H1 (cell line): ENCODE measurements at regions of chr17 and their contacts with region 1.

Region 1: DNA sequence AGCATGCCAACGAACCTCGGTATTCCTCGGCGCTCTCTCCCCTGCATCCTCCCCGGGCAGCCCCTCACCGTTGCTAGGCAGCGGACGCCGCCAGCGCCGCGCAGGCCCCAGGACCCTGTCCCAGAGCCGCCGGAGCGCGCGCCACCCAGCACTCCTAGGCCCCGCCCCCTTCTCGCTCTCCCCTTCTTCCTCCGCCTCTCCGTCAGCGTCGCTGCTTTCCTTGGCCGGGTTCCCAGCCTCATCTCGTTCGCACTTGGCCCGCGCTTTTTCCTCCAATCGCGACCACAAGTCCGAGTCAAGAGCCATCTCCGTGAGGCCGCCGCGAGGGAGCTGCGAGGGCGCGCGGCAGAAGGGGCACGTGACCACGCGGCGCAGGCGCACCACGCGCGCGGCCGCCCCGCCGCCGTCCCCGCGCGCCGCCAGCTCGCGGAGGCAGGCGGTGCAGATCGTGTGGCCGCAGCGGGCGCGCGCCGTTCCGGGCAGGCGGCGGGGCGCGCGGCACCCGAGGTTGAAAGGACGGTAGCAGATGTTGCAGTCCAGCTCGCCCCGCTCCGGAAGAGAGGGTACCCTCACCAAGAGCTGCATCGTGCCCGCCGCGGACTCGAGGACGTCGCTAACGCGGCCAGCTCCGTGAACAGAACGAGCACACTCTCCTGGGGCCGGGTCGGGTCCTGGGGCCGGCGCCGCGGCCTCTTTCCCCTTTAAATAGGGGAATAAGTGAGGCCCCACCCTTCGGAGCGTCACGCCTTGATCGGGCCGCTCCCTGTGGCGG is at the start of gene RNF227:
- DNase-seq: peak in 1 of 2 experiments; percentile 92
- H3K4me3 ChIP-seq: peak within 1 kb of the TSS; percentile 30 to 53 (median 37)
- H3K27ac ChIP-seq: no peak within 1 kb of the TSS
- H3K4me1 ChIP-seq: peaks cover 0 to 6% (median 6%) of the 10 kb centered on the region in 4 experiments; a peak in 5 of 7 replicates
- H3K27me3 ChIP-seq: peaks cover 10 to 30% (median 26%) of the 10 kb centered on the region in 4 experiments
- CTCF ChIP-seq: no peak
- EP300 ChIP-seq: no peak
- POLR2A ChIP-seq: no peak
- RAD21 ChIP-seq: no peak
- total RNA-seq, gene RNF227: 0.63 and 0.77 TPM in 2 replicates

Region 2: DNA sequence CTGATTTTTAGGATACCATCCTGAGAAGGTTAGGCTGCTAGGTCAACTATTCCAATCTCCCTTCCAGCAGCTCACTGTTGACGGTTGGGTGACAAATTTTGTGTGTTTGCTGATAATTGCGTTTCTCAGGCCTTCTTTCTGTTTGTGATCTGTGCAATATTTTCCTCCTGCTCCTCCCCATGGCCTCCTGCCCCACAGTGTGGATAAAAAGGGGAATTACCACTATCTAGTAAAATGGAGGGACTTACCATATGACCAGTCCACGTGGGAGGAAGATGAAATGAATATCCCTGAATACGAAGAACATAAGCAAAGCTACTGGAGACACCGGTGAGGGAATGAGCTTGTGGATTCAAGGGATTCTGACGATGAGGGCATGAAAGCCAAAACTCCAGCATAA is 18.0 kb before region 1 on chr17:
- CTCF ChIA-PET with region 1: interaction called, 19 read pairs
- POLR2A ChIA-PET with region 1: interaction called, 3 read pairs
- DNase-seq: no peak
- H3K4me3 ChIP-seq: no peak overlapping the region
- H3K27ac ChIP-seq: no peak overlapping the region
- H3K4me1 ChIP-seq: no peaks in the 10 kb centered on the region; a peak in 1 of 7 replicates
- H3K27me3 ChIP-seq: no peaks in the 10 kb centered on the region
- CTCF ChIP-seq: peak in 1 of 3 experiments; percentile 11; a peak in 2 of 4 replicates
- EP300 ChIP-seq: no peak
- POLR2A ChIP-seq: no peak
- RAD21 ChIP-seq: peak; percentile 37 to 53

Region 3: GRCh38 chr17:7931709-7932482 is 16.1 kb after region 1 on chr17 and contains the starts of genes CNTROB and TRAPPC1:
- CTCF ChIA-PET with region 1: interaction called, 11 read pairs
- POLR2A ChIA-PET with region 1: interaction called, 9 read pairs
- DNase-seq: peak; percentile 90 to 98
- H3K4me3 ChIP-seq: peak within 1 kb of the TSS; percentile 80 to 95 (median 89)
- H3K27ac ChIP-seq: peak within 1 kb of the TSS; percentile 16; the same call in 1 of the 2 replicates
- H3K4me1 ChIP-seq: peaks cover 0 to 5% (median 3%) of the 10 kb centered on the region in 4 experiments; a peak in 4 of 7 replicates
- H3K27me3 ChIP-seq: peaks cover 11 to 28% (median 25%) of the 10 kb centered on the region in 4 experiments
- CTCF ChIP-seq: peak in 1 of 3 experiments; percentile 6; a peak in 1 of 4 replicates
- EP300 ChIP-seq: no peak
- POLR2A ChIP-seq: no peak
- RAD21 ChIP-seq: no peak
- total RNA-seq, gene CNTROB: 30.0 and 31.9 TPM in 2 replicates
- total RNA-seq, gene TRAPPC1: 99.3 and 114 TPM in 2 replicates

Region 4: GRCh38 chr17:7961421-7961820 is 45.6 kb after region 1 on chr17:
- CTCF ChIA-PET with region 1: no interaction called
- POLR2A ChIA-PET with region 1: no interaction called
- DNase-seq: no peak
- H3K4me3 ChIP-seq: no peak overlapping the region
- H3K27ac ChIP-seq: no peak overlapping the region
- H3K4me1 ChIP-seq: no peaks in the 10 kb centered on the region
- H3K27me3 ChIP-seq: no peaks in the 10 kb centered on the region; a peak in 2 of 7 replicates
- CTCF ChIP-seq: no peak
- EP300 ChIP-seq: no peak
- POLR2A ChIP-seq: no peak
- RAD21 ChIP-seq: no peak